MCF 10A (cell line): ENCODE measurements at regions of chr5 and their contacts with region 1.

Region 1: GRCh38 chr5:69517763-69518212 is 25.2 kb downstream of the OCLN start:
- DNase-seq: peak; percentile 96
- H3K4me3 Mint-ChIP-seq: peak overlapping the region; percentile 47
- H3K27ac Mint-ChIP-seq: peak overlapping the region; percentile 85
- H3K4me1 Mint-ChIP-seq: peaks cover 24% of the 10 kb centered on the region
- H3K27me3 Mint-ChIP-seq: no peaks in the 10 kb centered on the region
- CTCF ChIP-seq: no peak

Region 2: DNA sequence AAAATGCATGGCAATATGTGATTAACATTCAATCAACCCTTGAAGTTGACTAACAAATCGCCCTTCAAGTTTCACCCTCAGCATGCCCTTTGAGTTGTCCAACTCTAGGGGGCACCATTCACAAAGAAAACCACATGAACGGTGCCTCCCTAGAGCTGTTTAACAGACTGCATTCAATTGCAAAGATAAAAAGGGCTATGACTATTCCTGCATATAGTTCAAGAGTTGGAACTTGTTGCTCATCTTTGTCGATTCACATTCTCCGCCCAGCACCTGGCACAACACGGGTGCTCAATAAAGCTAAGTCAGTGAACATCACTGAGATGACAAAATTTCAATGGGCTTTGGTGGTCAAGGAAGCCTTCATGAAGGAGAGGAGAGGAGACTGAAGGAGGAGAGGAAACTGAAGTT is 493.5 kb before region 1 on chr5:
- CTCF ChIA-PET with region 1: no interaction called
- POLR2A ChIA-PET with region 1: no interaction called
- intact Hi-C with region 1: no loop called
- DNase-seq: peak; percentile 74
- H3K4me3 Mint-ChIP-seq: no peak overlapping the region
- H3K27ac Mint-ChIP-seq: no peak overlapping the region
- H3K4me1 Mint-ChIP-seq: no peaks in the 10 kb centered on the region
- H3K27me3 Mint-ChIP-seq: peaks cover 32% of the 10 kb centered on the region
- CTCF ChIP-seq: peak; percentile 69

Region 3: DNA sequence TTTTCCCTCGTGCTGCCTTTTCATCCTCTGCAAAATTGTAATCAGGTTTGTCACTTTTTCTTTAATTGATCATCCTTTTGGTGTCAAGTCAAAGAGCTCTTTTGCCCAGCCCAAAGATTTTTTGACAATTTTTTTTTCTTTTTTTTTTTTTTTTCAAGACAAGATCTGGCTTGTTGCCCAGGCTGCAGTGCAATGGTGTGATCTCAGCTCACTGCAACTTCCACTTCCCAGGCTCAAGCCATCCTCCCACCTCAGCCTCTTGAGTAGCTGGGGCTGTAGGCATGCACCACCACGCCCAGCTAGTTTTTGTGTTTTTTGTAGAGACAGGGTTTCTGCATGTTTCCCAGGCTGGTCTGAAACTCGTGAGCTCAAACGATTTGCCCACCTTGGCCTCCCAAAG is 246.4 kb before region 1 on chr5:
- CTCF ChIA-PET with region 1: no interaction called
- POLR2A ChIA-PET with region 1: no interaction called
- intact Hi-C with region 1: no loop called
- DNase-seq: peak; percentile 54
- H3K4me3 Mint-ChIP-seq: no peak overlapping the region
- H3K27ac Mint-ChIP-seq: no peak overlapping the region
- H3K4me1 Mint-ChIP-seq: peaks cover 10% of the 10 kb centered on the region
- H3K27me3 Mint-ChIP-seq: no peaks in the 10 kb centered on the region
- CTCF ChIP-seq: no peak

Region 4: DNA sequence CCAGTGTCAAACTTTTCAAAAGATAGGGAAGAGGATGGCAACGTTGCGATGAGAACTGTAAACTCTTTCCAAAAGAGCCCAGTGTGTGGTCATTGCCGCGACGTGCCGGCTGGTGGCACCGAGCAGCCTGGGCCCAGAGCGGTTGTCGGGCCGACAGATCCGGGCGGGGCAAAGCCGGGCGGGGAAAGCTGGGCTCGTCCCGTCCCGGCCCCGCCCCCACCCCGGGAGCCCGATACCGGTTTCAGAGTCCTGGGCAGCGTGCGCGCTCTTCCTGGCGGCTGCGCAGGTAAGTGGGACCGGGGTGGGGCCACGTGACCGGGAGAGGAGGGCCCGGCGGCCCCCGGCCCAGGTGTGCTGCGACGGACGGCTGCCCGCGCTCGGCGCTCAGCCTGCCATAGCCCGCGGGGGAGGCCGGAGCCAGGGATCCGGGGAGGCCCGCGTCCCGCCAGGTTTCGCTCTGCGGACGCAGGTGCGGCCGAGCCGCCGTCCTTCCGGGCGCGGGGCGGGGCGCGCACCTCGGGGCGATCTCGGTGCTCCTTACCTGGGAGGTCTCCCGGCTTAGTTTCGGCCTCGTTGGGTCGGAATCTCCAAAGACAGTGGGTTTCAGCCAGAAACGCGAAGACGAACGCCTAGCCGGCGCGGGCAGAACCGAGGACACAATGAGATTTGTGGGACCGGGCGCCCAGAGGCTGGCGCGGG is 102.8 kb before region 1 on chr5 and contains the start of gene MARVELD2:
- CTCF ChIA-PET with region 1: interaction called, 4 read pairs
- POLR2A ChIA-PET with region 1: interaction called, 45 read pairs
- intact Hi-C with region 1: no loop called
- DNase-seq: peak; percentile 91
- H3K4me3 Mint-ChIP-seq: peak within 1 kb of the TSS; percentile 87
- H3K27ac Mint-ChIP-seq: peak within 1 kb of the TSS; percentile 90
- H3K4me1 Mint-ChIP-seq: peaks cover 16% of the 10 kb centered on the region
- H3K27me3 Mint-ChIP-seq: no peaks in the 10 kb centered on the region
- CTCF ChIP-seq: peak; percentile 50
- total RNA-seq, gene MARVELD2: 19.4 and 21.8 TPM in 2 replicates

Region 5: DNA sequence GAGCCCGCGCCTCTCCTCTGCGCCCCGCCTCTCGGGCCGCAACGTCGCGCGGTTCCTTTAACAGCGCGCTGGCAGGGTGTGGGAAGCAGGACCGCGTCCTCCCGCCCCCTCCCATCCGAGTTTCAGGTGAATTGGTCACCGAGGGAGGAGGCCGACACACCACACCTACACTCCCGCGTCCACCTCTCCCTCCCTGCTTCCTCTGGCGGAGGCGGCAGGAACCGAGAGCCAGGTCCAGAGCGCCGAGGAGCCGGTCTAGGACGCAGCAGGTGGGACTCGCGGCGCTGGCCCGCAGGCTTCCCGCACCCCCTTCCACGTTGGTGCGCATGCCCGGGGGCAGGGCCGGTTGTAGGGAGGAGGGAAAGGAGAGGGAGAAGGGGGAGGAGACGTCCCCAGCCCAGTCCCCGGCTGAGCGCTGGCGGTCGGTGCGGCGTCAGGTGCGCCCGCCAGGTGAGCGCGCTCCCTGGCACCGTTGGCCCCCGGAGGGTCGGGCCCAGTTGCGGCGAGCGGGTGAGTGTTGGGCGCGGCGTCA is 25.3 kb before region 1 on chr5 and contains the start of gene OCLN:
- CTCF ChIA-PET with region 1: no interaction called
- POLR2A ChIA-PET with region 1: interaction called, 26 read pairs
- intact Hi-C with region 1: no loop called
- DNase-seq: peak; percentile 80
- H3K4me3 Mint-ChIP-seq: peak within 1 kb of the TSS; percentile 92
- H3K27ac Mint-ChIP-seq: peak within 1 kb of the TSS; percentile 46
- H3K4me1 Mint-ChIP-seq: no peaks in the 10 kb centered on the region
- H3K27me3 Mint-ChIP-seq: peaks cover 28% of the 10 kb centered on the region
- CTCF ChIP-seq: no peak
- total RNA-seq, gene OCLN: 9.0 and 21.7 TPM in 2 replicates

Region 6: DNA sequence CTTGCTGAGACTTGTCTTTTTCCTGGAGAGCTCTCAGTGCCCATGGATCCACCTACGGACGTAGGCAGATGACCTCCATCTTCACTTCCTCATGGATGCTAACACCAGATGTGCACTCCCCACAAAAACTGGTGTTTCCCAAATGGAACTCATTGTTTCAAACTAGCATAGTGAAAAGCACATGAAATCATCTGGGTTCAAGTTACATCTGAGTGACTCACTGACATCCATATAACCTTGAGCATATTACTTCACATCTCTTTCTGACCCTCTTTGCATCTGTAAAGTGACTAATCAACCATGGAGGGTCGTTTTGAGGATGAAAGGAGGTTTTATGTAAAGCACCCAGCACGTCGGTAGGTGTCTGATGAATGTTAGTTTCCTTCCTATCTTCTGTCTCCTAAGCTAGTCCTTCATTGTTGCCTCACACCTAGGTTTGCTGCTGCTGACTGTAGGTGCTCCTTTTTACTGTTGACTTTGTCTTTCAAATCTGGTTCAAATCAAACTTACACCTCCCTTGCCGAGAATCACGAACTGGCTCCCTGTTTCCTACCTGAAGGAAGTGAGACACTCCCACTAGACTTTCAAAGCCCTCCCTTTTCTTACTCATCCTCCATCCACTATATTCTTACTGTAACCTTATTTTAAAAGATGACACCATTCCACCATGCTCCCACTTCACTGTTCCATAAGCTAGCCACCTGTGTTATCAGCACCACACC is 14.9 kb before region 1 on chr5:
- CTCF ChIA-PET with region 1: interaction called, 7 read pairs
- POLR2A ChIA-PET with region 1: interaction called, 29 read pairs
- intact Hi-C with region 1: no loop called
- DNase-seq: peak; percentile 84
- H3K4me3 Mint-ChIP-seq: no peak overlapping the region
- H3K27ac Mint-ChIP-seq: peak overlapping the region; percentile 28
- H3K4me1 Mint-ChIP-seq: peaks cover 15% of the 10 kb centered on the region
- H3K27me3 Mint-ChIP-seq: no peaks in the 10 kb centered on the region
- CTCF ChIP-seq: no peak